OCI-LY7 (cell line): ENCODE measurements at regions of chr11 and their contacts with region 1.

Region 1: GRCh38 chr11:126465573-126466188 is 110.2 kb downstream of the ST3GAL4 start:
- DNase-seq: peak; percentile 90
- H3K4me3 ChIP-seq: peak overlapping the region; percentile 57
- H3K27ac ChIP-seq: peak overlapping the region; percentile 89
- H3K4me1 ChIP-seq: peaks cover 45% of the 10 kb centered on the region
- CTCF ChIP-seq: no peak

Region 2: GRCh38 chr11:126345759-126346585 is 119.7 kb before region 1 on chr11:
- CTCF ChIA-PET with region 1: interaction called, 11 read pairs
- POLR2A ChIA-PET with region 1: no interaction called
- intact Hi-C with region 1: no loop called
- DNase-seq: no peak
- H3K4me3 ChIP-seq: no peak overlapping the region
- H3K27ac ChIP-seq: no peak overlapping the region
- H3K4me1 ChIP-seq: peaks cover under 1% of the 10 kb centered on the region
- CTCF ChIP-seq: no peak

Region 3: GRCh38 chr11:126628790-126629621 is 163.3 kb after region 1 on chr11:
- CTCF ChIA-PET with region 1: no interaction called
- POLR2A ChIA-PET with region 1: no interaction called
- intact Hi-C with region 1: no loop called
- DNase-seq: no peak
- H3K4me3 ChIP-seq: no peak overlapping the region
- H3K27ac ChIP-seq: no peak overlapping the region
- H3K4me1 ChIP-seq: no peaks in the 10 kb centered on the region
- CTCF ChIP-seq: no peak